Body of pancreas (tissue), 4 donors: ENCODE measurements at regions of chr15 and their contacts with region 1.

Region 1: GRCh38 chr15:22224241-22224671 is 143.9 kb downstream of the OR4M2 start:
- DNase-seq: no peak
- ATAC-seq: no peak
- H3K4me3 ChIP-seq: no peak overlapping the region
- H3K27ac ChIP-seq: no peak overlapping the region
- H3K4me1 ChIP-seq: no peaks in the 10 kb centered on the region
- H3K27me3 ChIP-seq: no peaks in the 10 kb centered on the region
- CTCF ChIP-seq: no peak
- POLR2A ChIP-seq: no peak

Region 2: DNA sequence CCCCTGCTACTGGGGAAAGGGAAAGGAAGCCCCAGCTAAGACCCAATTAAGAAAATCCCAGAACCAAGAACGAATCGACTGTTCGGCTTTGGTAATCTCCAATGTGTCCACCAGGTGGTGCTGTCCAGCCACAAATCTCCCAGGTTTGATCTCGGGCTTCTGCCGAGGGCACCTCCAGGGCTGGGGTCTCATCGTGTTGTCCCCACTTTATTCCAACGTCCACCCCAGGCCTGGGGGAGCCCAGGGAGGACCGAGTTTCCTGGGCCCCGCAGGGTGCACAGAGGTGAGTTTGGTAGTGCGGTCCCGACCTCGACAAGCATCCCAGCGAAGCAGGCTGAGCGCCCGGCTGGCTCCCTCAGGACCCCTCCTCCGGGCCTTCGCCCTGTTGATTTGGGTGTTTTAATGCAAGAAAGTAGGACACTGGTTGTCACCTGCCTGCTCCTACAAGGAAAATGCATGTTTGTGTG is 1867.8 kb before region 1 on chr15:
- intact Hi-C with region 1: loop called (anchors 10 kb)
- DNase-seq: peak in 3 of 4 donors; percentile 56 to 75 (median 69)
- ATAC-seq: peak; percentile 30
- H3K4me3 ChIP-seq: no peak overlapping the region
- H3K27ac ChIP-seq: no peak overlapping the region
- H3K4me1 ChIP-seq: no peaks in the 10 kb centered on the region
- H3K27me3 ChIP-seq: peaks cover 0 to 4% of the 10 kb centered on the region in 2 donors
- CTCF ChIP-seq: peak; percentile 67 to 92 (median 80)
- POLR2A ChIP-seq: no peak